ENCODE measurements at regions of chr1 and their contacts with region 1.

Region 1: DNA sequence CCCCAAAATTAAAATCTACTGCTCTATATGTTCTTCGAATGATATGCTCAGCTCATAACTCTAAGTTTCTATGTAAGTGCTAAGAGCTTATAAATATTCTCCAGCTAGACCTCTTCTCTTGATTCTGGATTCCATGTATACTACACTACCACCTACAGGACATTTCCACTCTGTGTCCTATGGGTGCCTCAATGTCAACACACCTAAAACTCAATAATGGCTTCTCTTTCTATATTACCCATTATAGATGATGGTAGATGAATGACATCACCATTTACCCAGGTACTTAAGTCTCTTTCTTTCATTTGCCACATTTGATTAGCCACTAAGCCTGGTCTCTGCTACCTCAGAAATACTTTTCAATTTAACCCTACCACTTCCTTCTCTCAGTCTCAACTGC is 41.3 kb downstream of the TBX19 start:
- DNase-seq: no peak
- ATAC-seq: no peak

Region 2: DNA sequence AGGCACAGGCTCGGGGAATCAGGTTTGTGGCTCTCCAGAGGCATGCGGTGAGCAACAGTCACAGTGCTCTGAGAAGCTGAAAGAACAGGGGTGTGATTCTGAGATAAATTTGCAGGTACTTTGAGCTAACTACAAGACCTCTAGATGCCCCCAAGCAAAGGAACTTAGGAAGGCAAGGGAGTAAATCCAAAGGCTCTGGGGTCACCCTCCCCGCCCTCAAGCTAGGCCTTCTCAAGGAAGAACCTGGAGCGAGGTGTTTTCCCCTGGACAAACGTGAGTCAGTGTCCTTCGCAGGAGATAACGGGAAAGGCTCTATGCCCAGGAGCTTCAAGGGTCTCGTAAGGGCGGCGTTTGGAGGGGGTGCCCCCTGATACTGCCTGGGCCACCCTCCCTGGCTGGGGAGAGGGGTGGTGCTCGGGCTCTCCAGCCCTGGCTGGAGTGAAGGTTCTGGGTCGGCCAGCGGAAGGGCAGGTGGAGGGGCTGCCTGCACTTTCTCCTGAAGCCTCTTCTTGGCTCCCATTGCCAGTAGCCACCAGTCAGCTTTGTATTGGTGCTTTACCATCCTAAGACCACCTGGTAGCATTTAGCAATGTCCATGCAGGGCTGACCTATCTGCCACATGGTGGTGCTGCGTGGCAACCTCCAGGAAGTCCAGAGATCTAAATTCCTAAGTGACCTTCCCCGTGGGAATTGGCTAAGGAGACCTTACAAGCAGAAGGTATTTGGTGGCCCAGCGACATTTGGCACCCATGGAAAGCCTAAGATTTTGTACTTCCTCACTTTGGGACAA is 229.2 kb before region 1 on chr1:
- intact Hi-C with region 1: loop called (anchors 5 kb)
- DNase-seq: no peak
- ATAC-seq: no peak

Measured in Right ventricle myocardium inferior (tissue), 1 donor.